Caco-2 (cell line): ENCODE measurements at regions of chr19 and their contacts with region 1.

Region 1: GRCh38 chr19:34171877-34172660 is at the start of gene LSM14A:
- DNase-seq: peak; percentile 92 to 96
- H3K4me3 ChIP-seq: peak within 1 kb of the TSS; percentile 100
- H3K4me3 Mint-ChIP-seq: peak within 1 kb of the TSS; percentile 97
- H3K27ac Mint-ChIP-seq: peak within 1 kb of the TSS; percentile 100
- H3K4me1 ChIP-seq: peaks cover 17% of the 10 kb centered on the region
- H3K4me1 Mint-ChIP-seq: peaks cover 22% of the 10 kb centered on the region
- H3K27me3 ChIP-seq: no peaks in the 10 kb centered on the region
- H3K27me3 Mint-ChIP-seq: no peaks in the 10 kb centered on the region
- CTCF ChIP-seq: no peak
- total RNA-seq, gene LSM14A: 228 and 233 TPM in 2 replicates

Region 2: GRCh38 chr19:34134190-34135053 is 37.6 kb before region 1 on chr19:
- CTCF ChIA-PET with region 1: interaction called, 4 read pairs
- POLR2A ChIA-PET with region 1: interaction called, 3 read pairs
- intact Hi-C with region 1: loop called (anchors 1 kb)
- DNase-seq: peak; percentile 89 to 93
- H3K4me3 ChIP-seq: peak overlapping the region; percentile 66
- H3K4me3 Mint-ChIP-seq: peak overlapping the region; percentile 93
- H3K27ac Mint-ChIP-seq: peak overlapping the region; percentile 85
- H3K4me1 ChIP-seq: 0 out of 2 replicates have a peak, but pooled peaks cover 4% of the 10 kb centered on the region
- H3K4me1 Mint-ChIP-seq: no peaks in the 10 kb centered on the region
- H3K27me3 ChIP-seq: no peaks in the 10 kb centered on the region
- H3K27me3 Mint-ChIP-seq: no peaks in the 10 kb centered on the region
- CTCF ChIP-seq: no peak

Region 3: DNA sequence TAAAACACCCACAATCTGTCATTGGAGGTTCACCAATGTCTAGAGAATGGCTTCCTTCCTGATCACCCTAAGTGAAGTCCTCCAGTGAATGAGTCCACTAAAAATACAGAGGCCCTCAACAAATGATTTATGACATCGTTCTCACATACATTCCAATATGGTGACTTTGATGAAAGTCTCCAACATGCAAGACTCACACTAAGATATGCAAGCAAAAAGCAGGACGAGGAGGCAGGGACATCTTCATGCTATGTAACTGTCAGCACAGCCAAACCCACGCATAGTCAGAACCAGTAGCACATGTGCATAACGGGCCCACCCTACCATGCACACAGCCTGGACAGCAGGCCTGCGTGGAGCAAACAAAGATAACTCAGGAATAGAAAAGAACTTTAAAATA is 16.4 kb before region 1 on chr19:
- CTCF ChIA-PET with region 1: no interaction called
- POLR2A ChIA-PET with region 1: no interaction called
- intact Hi-C with region 1: no loop called
- DNase-seq: no peak
- H3K4me3 ChIP-seq: no peak overlapping the region
- H3K4me3 Mint-ChIP-seq: no peak overlapping the region
- H3K27ac Mint-ChIP-seq: no peak overlapping the region
- H3K4me1 ChIP-seq: no peaks in the 10 kb centered on the region
- H3K4me1 Mint-ChIP-seq: no peaks in the 10 kb centered on the region
- H3K27me3 ChIP-seq: peaks cover 1% of the 10 kb centered on the region; the same call in 1 of the 2 replicates
- H3K27me3 Mint-ChIP-seq: peaks cover 2% of the 10 kb centered on the region
- CTCF ChIP-seq: no peak

Region 4: DNA sequence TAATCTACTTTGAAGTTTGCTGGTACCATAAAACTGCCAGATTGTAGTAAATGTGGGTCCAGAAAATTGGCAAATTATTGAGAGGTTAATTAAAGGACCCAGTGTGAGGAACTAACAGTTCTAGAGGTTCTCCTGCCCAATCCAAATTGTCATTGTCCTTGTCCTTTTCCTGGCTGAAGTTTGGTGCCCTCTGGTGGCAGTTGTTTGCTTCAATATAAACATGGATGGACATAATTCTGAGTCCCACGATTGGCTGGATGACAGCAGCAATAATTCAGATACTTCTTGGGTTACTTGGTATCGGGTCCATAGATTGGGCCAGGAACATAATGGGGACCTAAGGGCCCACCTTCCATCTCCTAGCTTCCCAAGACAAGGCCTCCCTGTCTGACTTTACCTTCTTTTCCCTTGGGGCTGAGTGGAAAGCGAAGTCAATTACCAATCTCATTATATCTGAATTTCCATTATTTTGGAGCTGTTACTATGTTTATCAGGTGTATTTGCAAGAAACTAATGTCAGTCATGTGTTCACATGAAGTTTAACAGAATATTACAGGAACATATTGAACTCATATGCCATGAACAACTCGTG is 48.5 kb after region 1 on chr19:
- CTCF ChIA-PET with region 1: no interaction called
- POLR2A ChIA-PET with region 1: no interaction called
- intact Hi-C with region 1: loop called (anchors 2 kb)
- DNase-seq: peak; percentile 66 to 80
- H3K4me3 ChIP-seq: no peak overlapping the region
- H3K4me3 Mint-ChIP-seq: no peak overlapping the region
- H3K27ac Mint-ChIP-seq: no peak overlapping the region
- H3K4me1 ChIP-seq: no peaks in the 10 kb centered on the region
- H3K4me1 Mint-ChIP-seq: no peaks in the 10 kb centered on the region
- H3K27me3 ChIP-seq: no peaks in the 10 kb centered on the region
- H3K27me3 Mint-ChIP-seq: no peaks in the 10 kb centered on the region
- CTCF ChIP-seq: peak; percentile 70 to 81